Right ventricle myocardium superior (tissue), 1 donor: ENCODE measurements at regions of chr7 and their contacts with region 1.

Region 1: DNA sequence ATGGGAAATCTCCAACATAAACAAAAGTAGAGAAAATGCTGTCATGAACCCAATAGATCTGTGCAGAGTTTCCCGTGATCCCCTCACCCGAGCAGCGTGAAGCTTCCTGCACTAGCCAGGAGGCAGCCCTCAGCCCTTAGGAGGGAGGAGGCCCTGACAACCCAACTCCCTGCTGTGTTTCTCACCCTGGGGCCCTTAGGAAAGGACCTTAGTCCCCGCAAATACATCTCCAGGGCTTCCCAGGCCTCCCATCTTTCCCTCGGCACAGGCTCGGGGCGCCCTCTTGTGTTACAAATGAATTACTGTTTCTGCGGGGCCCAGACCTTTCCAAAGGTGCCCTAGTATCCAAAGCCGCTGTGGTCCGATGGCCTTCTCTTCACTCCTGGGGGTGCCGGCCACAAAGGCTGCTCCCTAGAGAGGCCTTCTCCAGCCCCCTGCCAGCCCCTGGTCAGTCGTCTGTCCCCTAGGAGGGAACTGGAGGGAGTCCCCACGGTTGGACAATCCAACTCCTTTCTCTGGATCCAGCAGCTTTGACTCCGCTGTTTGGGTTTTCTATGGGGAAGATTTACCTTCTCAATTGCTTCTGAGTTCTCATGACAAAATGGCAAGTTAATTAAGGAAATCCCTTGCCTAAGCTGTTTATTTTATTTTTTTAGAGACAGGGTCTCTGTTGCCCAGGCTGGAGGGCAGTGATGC is 49.9 kb upstream of the SH2B2 start:
- DNase-seq: peak; percentile 74
- ATAC-seq: peak; percentile 82

Region 2: DNA sequence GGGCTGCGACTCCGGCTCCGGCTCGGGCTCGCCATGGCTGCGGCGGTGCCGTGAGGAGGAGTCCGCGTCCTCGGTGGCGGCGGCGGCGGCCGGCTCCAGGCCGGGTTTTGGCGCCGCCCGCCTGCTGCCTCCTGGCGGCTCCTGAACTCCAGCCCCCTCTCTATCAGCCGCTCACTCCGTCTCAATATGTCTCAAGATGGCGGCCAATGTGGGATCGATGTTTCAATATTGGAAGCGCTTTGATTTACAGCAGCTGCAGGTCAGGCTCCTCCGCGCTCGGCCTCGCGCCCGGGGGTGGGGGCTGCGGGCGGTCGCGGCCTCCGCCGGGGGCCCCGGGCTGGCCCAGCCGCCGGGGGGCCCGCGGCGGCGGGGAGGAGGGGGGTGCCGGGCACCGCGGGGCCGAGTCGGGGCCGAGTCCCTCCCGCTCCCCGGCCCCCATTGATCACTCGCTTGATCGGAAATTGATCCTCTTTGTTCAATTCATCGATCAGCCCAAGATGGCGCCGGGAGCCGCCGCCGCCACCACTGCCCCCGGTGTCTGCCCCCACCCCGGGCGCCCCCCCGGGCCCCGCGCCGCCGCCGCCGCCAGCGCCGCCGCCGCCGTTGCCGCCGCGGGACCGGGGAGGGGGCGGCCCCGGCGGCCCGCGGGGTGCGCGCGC is 420.8 kb before region 1 on chr7:
- intact Hi-C with region 1: loop called (anchors 10 kb)
- DNase-seq: peak; percentile 84
- ATAC-seq: peak; percentile 86

Region 3: DNA sequence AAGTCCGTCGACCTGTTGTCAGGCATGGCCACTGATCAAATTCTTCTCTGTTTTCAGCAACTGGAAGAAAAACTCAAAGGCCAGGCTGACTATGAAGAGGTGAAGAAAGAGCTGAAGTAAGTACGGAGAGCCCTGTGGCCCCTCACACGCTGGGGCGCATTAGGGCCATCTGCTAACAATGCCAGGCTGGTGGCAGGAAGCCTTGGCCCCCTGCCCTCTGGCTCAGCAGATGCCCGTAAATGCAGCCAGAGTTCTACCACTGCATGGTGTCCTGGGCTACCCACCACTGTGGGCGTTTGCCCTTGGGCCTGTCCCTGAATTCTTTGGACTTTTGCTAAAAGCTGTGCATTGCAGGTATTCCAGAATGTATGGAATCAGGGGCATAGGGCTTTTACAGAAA is 47.0 kb before region 1 on chr7:
- intact Hi-C with region 1: no loop called
- DNase-seq: peak; percentile 75
- ATAC-seq: peak; percentile 91